Thyroid gland (tissue), 4 donors: ENCODE measurements at regions of chr1 and their contacts with region 1.

Region 1: DNA sequence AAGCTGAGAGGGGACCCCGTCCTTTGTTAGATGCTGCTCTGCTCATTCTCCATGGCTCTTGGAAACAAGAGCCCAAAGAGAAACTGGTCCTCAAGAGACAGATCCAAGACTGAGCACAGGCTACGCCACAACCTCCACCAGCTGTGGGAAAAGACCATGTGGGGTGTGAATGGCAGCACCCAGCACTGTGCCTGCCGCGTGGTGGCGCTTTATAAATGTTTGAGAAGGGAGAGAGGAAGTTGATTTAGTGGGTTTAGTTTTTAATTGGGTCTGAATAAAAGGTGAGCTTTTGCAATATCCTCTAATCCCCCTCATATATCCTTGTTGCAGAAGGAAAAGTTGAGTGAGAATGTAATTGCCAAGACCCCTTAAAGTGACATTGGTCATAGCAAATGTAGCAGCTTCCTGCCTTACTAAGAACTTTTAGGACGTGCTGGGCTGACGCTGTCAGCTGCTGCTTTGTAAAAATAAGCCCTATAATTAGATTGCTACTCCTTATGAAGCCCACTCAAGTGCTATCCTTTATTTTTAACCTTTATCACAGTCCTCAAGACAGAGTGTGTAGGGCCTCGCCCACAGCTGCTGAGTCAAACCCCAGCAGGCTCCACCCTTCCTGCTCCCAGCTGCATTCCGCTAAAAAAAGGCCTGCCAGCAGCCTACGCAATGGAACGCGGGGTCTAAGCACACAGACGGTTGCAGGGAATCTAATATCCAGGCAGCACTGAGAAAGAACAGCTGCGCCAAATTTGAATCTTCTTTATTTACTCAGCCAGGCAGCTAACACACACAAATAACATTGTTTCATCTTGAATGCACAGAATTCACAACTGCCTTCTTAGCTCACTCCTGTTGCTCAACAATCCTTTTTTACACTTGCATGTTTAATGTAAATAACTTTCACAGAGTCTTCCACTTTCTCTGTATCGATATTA is 47.4 kb upstream of the PRDX6 start:
- DNase-seq: peak; percentile 75 to 84
- H3K4me3 ChIP-seq: no peak overlapping the region
- H3K27ac ChIP-seq: peak overlapping the region; percentile 70 to 74 (median 71)
- H3K4me1 ChIP-seq: peaks cover 10 to 17% of the 10 kb centered on the region in 2 donors
- H3K27me3 ChIP-seq: no peaks in the 10 kb centered on the region
- CTCF ChIP-seq: peak in 5 of 6 experiments; percentile 16 to 71 (median 52)
- POLR2A ChIP-seq: peak in 1 of 2 donors; percentile 47

Region 2: GRCh38 chr1:173318788-173319187 is 110.9 kb before region 1 on chr1:
- intact Hi-C with region 1: no loop called
- DNase-seq: no peak
- H3K4me3 ChIP-seq: no peak overlapping the region
- H3K27ac ChIP-seq: no peak overlapping the region
- H3K4me1 ChIP-seq: no peaks in the 10 kb centered on the region
- H3K27me3 ChIP-seq: no peaks in the 10 kb centered on the region
- CTCF ChIP-seq: no peak
- POLR2A ChIP-seq: no peak

Region 3: GRCh38 chr1:173473599-173474011 is 43.9 kb after region 1 on chr1:
- intact Hi-C with region 1: loop called (anchors 5 kb)
- DNase-seq: no peak
- H3K4me3 ChIP-seq: no peak overlapping the region
- H3K27ac ChIP-seq: no peak overlapping the region
- H3K4me1 ChIP-seq: peaks cover 13% of the 10 kb centered on the region in 2 donors
- H3K27me3 ChIP-seq: no peaks in the 10 kb centered on the region
- CTCF ChIP-seq: no peak
- POLR2A ChIP-seq: no peak

Region 4: GRCh38 chr1:173714759-173715537 is 285.2 kb after region 1 on chr1 and contains the start of gene KLHL20:
- intact Hi-C with region 1: loop called (anchors 10 kb)
- DNase-seq: peak; percentile 74 to 80
- H3K4me3 ChIP-seq: peak within 1 kb of the TSS; percentile 4 to 93 (median 69)
- H3K27ac ChIP-seq: peak within 1 kb of the TSS; percentile 70 to 84 (median 81)
- H3K4me1 ChIP-seq: peaks cover 8 to 9% of the 10 kb centered on the region in 2 donors
- H3K27me3 ChIP-seq: no peaks in the 10 kb centered on the region
- CTCF ChIP-seq: peak in 1 of 6 experiments; percentile 26
- POLR2A ChIP-seq: peak in 1 of 2 donors; percentile 76
- total RNA-seq, gene KLHL20: 23.2 to 36.4 (median 28.1) TPM

Region 5: GRCh38 chr1:173824331-173825081 is 394.8 kb after region 1 on chr1 and contains the starts of genes CENPL and DARS2:
- intact Hi-C with region 1: loop called (anchors 10 kb)
- DNase-seq: peak; percentile 97 to 99
- H3K4me3 ChIP-seq: peak within 1 kb of the TSS; percentile 26 to 84 (median 49)
- H3K27ac ChIP-seq: peak within 1 kb of the TSS; percentile 66 to 95 (median 80)
- H3K4me1 ChIP-seq: peaks cover 5 to 10% of the 10 kb centered on the region in 2 donors
- H3K27me3 ChIP-seq: no peaks in the 10 kb centered on the region
- CTCF ChIP-seq: no peak
- POLR2A ChIP-seq: peak in 1 of 2 donors; percentile 58
- total RNA-seq, gene CENPL: 4.4 to 8.1 (median 5.3) TPM
- total RNA-seq, gene DARS2: 14.9 to 26.9 (median 20.7) TPM